Activated naive CD4-positive, alpha-beta T cell treated with anti-CD3 and anti-CD28 coated beads, Interleukin-2, amount 10 ng/mL, durations not matched to agents 7 days and 5 days (primary cell): ENCODE measurements at regions of chr6 and their contacts with region 1.

Region 1: DNA sequence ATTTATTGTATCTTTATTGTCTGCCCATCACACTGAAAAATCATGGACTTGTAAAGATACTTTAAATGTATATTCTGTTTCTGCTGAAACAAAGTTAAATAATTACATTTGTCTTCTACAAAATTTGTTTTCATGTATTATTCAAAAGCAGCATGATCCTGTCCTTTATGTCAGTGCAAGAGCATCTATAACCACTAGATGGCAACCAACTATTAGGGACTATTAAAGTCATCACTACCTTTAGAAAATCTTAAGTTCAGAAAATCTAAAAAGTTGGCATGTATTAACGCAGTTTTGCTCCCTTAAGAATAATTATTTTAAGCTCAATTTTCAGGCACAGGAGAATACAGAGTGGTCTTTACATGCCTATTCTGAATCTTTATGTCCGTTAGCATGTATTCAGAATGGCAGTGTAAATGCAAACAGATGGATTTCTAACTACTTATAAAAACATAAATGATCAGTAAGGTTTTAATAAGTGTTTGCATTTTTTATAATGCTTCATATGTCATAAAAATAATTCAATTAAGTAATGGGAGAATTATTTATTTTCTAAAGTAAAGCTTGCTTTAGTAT is 17.8 kb downstream of the TMEM30A start:
- DNase-seq: no peak
- H3K4me3 Mint-ChIP-seq: no peak overlapping the region
- H3K27ac Mint-ChIP-seq: no peak overlapping the region
- H3K4me1 Mint-ChIP-seq: peaks cover 13% of the 10 kb centered on the region
- H3K27me3 Mint-ChIP-seq: no peaks in the 10 kb centered on the region

Region 2: DNA sequence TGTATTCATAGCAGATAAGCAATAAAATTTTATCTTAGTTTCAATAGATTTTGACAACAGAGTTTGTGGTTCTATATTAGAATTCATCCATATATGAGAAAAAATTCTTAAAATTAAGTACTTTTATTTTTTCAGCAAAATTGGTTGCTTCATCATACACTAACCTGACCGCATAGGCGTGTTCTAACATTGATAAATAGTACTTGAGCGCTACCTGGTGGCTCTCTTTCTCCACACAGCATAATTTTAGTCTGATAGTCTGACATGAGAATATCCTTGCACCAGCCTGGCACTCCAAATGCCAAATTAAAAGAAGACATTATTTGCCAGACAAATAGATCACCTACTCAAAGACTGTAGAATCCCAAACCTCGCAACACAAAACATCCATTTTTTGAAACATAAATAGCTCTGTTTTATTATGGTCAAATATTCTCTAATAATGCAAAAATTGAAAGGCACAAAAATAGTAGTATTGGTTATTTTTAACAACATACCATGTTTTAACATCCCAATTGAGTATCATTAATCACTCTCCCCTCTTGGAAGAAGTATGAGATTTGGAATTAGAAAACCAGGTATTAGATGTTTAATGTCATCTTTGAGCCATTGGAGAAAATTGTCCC is 259.8 kb after region 1 on chr6:
- CTCF ChIA-PET with region 1: interaction called, 11 read pairs
- DNase-seq: peak; percentile 67
- H3K4me3 Mint-ChIP-seq: no peak overlapping the region
- H3K27ac Mint-ChIP-seq: no peak overlapping the region
- H3K4me1 Mint-ChIP-seq: no peaks in the 10 kb centered on the region
- H3K27me3 Mint-ChIP-seq: peaks cover 15% of the 10 kb centered on the region